Activated T-helper 2 cell treated with anti-CD3 and anti-CD28 coated beads, Interferon-gamma antibody, Interleukin-2, Interleukin-4, amounts not matched to agents 10 μg/mL and 5 μg/mL and 100 μg/mL, durations not matched to agents 14 hours and 24 hours and 36 hours (primary cell): ENCODE measurements at regions of chr15 and their contacts with region 1.

Region 1: DNA sequence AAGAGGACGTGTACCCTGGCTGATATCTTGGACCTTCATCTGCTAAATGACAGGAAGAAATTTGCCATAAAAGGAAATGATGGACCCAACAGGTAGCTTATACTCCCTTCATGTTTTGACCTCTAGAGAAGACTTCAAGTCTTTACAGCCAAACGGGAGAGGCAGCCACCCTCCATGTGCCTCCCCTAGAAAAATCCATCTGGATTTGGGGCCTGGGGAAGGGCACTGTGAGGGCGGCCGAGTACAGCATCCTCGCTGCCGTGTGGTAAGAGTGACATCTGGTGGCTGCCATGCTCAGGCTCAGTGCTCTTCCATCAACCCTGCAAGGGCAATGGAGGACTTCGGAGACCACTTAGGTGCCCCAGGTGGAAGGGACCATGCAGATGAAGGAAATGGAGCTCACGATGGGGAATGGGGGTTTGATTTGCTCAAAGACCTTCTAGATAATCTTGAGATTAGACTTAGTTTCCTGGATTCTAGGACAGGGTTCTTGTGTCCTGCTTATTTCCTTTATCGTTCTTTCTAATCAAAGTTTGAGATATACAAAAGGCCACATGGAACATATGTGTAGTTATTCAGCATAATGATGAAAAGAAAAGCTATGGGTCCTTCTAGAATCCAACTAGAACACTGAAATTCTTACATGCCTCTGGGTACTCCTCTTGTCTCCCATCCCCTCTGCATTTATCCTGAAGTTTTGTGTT is 44.4 kb downstream of the AQP9 start:
- DNase-seq: peak; percentile 10
- H3K4me3 Mint-ChIP-seq: no peak overlapping the region
- H3K27ac Mint-ChIP-seq: no peak overlapping the region
- H3K4me1 Mint-ChIP-seq: peaks cover 8% of the 10 kb centered on the region
- H3K27me3 Mint-ChIP-seq: peaks cover 22% of the 10 kb centered on the region

Region 2: DNA sequence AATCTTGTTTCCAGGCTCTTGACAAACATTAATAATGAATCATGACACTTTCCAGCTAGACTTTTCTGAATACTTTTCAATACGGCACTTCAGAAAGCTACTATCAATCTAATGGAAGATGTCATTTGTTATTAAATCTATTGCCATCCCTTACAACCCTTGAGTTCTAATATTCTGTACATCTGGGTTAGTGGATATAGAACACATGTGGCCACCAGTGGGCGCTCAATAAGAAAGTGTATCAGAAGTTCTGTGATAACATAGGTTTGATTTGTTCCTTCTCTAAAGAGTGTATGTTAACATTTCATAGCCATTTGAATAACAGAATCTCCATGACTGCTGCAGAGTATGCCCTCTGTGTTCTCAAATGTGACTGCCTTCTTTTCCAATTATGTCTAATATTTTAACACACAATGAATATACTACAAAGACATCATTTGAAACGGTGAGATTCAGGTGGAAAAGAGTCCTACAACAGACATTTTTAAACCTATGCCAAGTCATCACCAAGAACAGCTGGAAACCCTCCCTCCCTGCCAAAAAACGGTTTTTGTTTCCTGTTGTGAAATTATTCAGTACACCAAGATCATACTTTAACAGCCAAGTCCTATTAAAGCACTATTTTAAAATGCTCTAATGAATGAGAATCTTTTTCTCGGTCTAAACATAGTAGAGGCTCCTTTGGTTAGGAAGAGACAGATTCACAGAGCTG is 139.3 kb before region 1 on chr15:
- intact Hi-C with region 1: loop called (anchors 1 kb)
- DNase-seq: no peak
- H3K4me3 Mint-ChIP-seq: no peak overlapping the region
- H3K27ac Mint-ChIP-seq: no peak overlapping the region
- H3K4me1 Mint-ChIP-seq: no peaks in the 10 kb centered on the region
- H3K27me3 Mint-ChIP-seq: peaks cover 37% of the 10 kb centered on the region

Region 3: GRCh38 chr15:58070801-58071418 is 111.7 kb before region 1 on chr15:
- intact Hi-C with region 1: loop called (anchors 5 kb)
- DNase-seq: no peak
- H3K4me3 Mint-ChIP-seq: no peak overlapping the region
- H3K27ac Mint-ChIP-seq: no peak overlapping the region
- H3K4me1 Mint-ChIP-seq: peaks cover 3% of the 10 kb centered on the region
- H3K27me3 Mint-ChIP-seq: peaks cover 45% of the 10 kb centered on the region